Spleen (tissue), 13 donors: ENCODE measurements at regions of chr17 and their contacts with region 1.

Region 1: GRCh38 chr17:21318439-21318838 is 33.9 kb downstream of the MAP2K3 start:
- DNase-seq: peak; percentile 79
- H3K4me3 ChIP-seq: no peak overlapping the region
- H3K27ac ChIP-seq: no peak overlapping the region
- H3K4me1 ChIP-seq: peaks cover 0 to 15% (median 12%) of the 10 kb centered on the region in 6 donors
- H3K27me3 ChIP-seq: peaks cover 0 to 1% (median 0%) of the 10 kb centered on the region in 7 donors
- CTCF ChIP-seq: no peak
- POLR2A ChIP-seq: no peak

Region 2: DNA sequence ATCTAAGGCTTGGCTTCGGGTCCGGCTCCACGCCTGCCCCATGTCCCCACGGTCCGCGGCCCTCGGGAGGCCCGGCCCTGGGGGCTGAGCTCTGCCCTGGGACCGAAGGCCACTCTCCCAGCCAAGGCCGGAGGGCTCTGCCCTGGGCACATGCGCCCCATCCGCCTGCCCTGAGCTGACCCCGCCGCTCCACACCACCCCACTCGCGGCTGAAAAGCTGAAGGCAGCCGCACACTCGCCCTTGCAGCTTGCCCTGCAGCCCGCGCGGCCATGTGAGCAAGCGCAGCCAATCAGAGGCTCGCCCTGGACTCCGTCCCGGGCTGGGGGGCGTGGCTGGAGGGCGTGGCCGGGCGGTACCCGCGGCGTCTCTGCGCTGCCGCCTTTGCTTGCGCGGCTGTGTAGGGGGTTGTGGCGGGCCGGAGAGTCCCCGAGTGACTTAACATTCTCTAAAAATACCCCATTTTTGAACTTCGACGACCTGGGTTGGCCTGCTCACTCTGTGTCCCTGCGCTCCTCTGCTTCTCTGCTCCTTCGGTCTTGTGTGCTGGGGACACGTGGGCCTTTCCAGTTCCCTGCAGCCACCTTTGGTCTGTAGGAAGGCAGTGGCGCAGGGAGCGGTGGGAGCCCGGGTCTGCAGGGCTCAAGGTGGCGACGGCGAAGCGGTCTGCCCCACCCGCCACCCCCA is 42.7 kb before region 1 on chr17:
- intact Hi-C with region 1: no loop called
- DNase-seq: peak; percentile 100
- H3K4me3 ChIP-seq: peak overlapping the region; percentile 47 to 82 (median 74)
- H3K27ac ChIP-seq: peak overlapping the region in 7 of 8 donors; percentile 65 to 86 (median 78)
- H3K4me1 ChIP-seq: peaks cover 12 to 62% (median 45%) of the 10 kb centered on the region in 6 donors
- H3K27me3 ChIP-seq: no peaks in the 10 kb centered on the region
- CTCF ChIP-seq: peak in 4 of 11 experiments; percentile 15 to 42 (median 22)
- POLR2A ChIP-seq: no peak

Region 3: DNA sequence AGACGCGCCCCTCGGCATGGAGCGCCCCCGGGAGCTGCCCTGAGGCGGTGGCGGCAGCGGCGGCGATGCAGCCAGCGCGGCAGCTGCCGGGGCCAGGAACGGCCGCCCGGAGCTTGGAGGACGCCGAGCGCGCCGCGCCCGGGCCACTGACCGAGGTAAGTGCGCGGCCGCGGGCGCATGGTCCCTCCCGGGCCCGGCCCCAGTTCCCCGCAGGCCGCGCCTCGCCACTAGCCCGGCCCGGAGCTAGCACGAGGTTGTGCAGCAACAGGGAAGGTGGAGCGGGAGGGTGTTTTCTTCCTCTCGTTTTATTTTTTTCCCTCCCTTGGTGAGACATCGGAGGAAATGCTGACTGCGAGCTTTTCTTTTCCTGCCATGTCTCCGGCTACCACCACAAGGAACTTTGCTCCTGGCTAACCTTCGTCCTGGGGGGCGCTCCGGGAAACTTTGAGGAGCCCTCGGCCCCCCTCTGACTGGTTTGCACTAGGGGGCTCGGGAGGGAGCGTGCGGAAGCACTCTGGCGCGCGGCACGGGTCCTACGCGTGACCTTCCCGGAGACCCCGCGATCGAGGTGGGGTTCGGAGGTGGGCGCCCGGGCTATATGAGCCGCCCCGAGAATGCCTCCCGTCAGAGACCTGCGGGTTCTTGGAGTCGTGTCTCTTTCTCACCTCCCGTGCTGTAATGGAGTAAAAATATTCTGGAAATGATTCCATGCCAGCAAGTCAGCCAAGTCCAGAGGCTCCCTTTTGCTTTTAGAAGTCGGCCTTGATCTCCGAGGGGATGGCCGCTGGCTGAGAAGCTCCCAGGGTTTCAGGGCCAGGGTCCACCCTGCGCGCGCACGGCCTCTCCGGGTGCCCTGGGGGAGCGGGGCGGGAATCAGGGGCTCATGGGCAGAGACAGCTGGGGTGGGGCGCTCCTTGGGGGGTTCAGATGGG is 58.6 kb after region 1 on chr17:
- intact Hi-C with region 1: no loop called
- DNase-seq: no peak
- H3K4me3 ChIP-seq: peak overlapping the region in 7 of 8 donors; percentile 32 to 65 (median 36)
- H3K27ac ChIP-seq: peak overlapping the region in 6 of 8 donors; percentile 48 to 78 (median 64)
- H3K4me1 ChIP-seq: peaks cover 12 to 52% (median 35%) of the 10 kb centered on the region in 6 donors
- H3K27me3 ChIP-seq: peaks cover 0 to 73% (median 43%) of the 10 kb centered on the region in 7 donors
- CTCF ChIP-seq: no peak
- POLR2A ChIP-seq: no peak

Region 4: GRCh38 chr17:21445091-21445650 is 126.7 kb after region 1 on chr17:
- intact Hi-C with region 1: loop called (anchors 10 kb)
- DNase-seq: no peak
- H3K4me3 ChIP-seq: no peak overlapping the region
- H3K27ac ChIP-seq: no peak overlapping the region
- H3K4me1 ChIP-seq: no peaks in the 10 kb centered on the region
- H3K27me3 ChIP-seq: peaks cover 0 to 7% (median 0%) of the 10 kb centered on the region in 7 donors
- CTCF ChIP-seq: no peak
- POLR2A ChIP-seq: no peak